Sigmoid colon (tissue), 7 donors: ENCODE measurements at regions of chr5 and their contacts with region 1.

Region 1: GRCh38 chr5:134527146-134527960 is 1.9 kb downstream of the JADE2 start:
- DNase-seq: peak; percentile 94
- H3K4me3 ChIP-seq: peak overlapping the region; percentile 73 to 95 (median 84)
- H3K27ac ChIP-seq: peak overlapping the region; percentile 95 to 99 (median 96)
- H3K4me1 ChIP-seq: peaks cover 0 to 55% (median 53%) of the 10 kb centered on the region in 4 donors
- H3K27me3 ChIP-seq: no peaks in the 10 kb centered on the region
- CTCF ChIP-seq: peak; percentile 92 to 99 (median 96)
- EP300 ChIP-seq: no peak
- POLR2A ChIP-seq: peak in 1 of 2 donors; percentile 45

Region 2: DNA sequence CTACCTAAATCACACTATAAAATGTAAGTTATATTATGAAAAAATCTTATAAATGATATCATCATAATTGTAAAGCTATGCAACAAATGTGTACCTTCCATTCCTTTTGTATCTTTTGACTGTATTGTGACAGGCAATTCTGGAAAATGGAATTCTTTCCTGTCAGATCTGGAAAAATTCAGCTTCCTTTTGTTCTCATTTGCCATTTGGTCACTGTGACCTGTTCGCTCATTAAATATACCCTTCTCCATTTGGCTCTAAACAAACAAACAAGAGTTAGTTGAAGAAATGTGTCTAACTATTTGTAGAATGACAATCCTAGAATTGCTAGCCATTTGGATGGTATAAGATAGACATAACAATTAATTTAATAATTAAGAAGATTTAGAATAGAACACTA is 223.0 kb before region 1 on chr5:
- intact Hi-C with region 1: loop called (anchors 5 kb)
- DNase-seq: no peak
- H3K4me3 ChIP-seq: no peak overlapping the region
- H3K27ac ChIP-seq: no peak overlapping the region
- H3K4me1 ChIP-seq: no peaks in the 10 kb centered on the region
- H3K27me3 ChIP-seq: no peaks in the 10 kb centered on the region
- CTCF ChIP-seq: no peak
- EP300 ChIP-seq: no peak
- POLR2A ChIP-seq: no peak

Region 3: DNA sequence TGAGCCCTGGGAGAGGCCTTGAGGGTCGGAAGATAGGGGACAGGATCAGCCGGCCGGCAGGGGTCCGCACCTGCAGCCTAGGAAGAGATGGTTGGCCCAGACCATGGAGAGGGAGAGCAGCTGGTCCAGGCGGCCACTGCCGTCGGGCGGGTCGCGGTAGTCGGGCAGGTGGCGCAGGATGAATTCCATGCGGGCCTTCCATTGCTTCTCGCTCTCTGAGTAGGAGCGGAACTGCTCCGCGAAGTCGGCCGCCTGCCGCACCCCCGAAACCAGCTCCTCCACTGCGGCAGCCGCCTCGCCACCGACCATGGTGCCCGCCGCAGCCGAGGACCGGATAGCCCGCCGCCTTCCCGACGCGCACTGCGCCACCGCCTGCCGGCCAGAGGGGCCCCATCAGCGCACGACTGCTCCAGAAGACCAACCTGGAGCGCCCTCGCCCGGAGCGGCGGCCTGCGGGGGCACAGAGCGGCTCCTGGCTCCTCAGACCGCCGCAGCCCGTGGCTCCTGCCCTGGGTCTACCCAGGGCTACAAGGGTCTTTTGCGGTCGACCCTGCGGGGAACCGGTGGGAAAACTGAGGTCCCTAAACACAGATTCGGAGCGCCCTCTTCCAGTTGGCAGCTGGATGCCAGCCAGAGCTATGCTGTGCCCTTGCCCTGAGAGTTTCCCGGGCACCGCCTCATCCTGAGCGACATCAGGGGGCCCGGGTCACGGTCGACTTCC is 115.6 kb before region 1 on chr5 and contains the start of gene CDKN2AIPNL:
- intact Hi-C with region 1: loop called (anchors 1 kb)
- DNase-seq: peak; percentile 95
- H3K4me3 ChIP-seq: peak within 1 kb of the TSS; percentile 63 to 88 (median 79)
- H3K27ac ChIP-seq: peak within 1 kb of the TSS; percentile 80 to 87 (median 84)
- H3K4me1 ChIP-seq: peaks cover 0 to 27% (median 25%) of the 10 kb centered on the region in 4 donors
- H3K27me3 ChIP-seq: no peaks in the 10 kb centered on the region
- CTCF ChIP-seq: peak; percentile 56 to 81 (median 74)
- EP300 ChIP-seq: no peak
- POLR2A ChIP-seq: peak; percentile 22 to 46
- total RNA-seq, gene CDKN2AIPNL: 18.9 to 28.5 (median 21.3) TPM

Region 4: DNA sequence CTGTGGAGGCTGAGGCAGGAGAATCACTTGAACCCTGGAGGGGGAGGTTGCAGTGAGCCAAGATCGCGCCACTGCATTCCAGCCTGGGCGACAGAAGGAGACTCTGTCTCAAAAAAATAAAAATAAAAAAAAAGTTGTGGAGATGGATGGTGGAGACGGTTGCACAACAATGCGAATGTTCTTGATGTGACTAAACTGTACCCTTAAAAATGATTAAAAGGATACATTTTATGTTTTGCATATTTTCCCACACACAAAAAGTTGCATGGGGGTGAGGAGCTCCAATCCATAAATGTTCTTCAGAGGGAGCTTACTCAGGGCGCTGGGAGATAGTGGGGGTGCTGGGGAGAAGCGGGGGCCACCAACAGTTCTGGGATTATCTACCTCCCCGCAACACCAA is 71.9 kb before region 1 on chr5:
- intact Hi-C with region 1: no loop called
- DNase-seq: peak; percentile 20
- H3K4me3 ChIP-seq: no peak overlapping the region
- H3K27ac ChIP-seq: no peak overlapping the region
- H3K4me1 ChIP-seq: peaks cover 0 to 21% (median 17%) of the 10 kb centered on the region in 4 donors
- H3K27me3 ChIP-seq: no peaks in the 10 kb centered on the region
- CTCF ChIP-seq: no peak
- EP300 ChIP-seq: no peak
- POLR2A ChIP-seq: no peak

Region 5: DNA sequence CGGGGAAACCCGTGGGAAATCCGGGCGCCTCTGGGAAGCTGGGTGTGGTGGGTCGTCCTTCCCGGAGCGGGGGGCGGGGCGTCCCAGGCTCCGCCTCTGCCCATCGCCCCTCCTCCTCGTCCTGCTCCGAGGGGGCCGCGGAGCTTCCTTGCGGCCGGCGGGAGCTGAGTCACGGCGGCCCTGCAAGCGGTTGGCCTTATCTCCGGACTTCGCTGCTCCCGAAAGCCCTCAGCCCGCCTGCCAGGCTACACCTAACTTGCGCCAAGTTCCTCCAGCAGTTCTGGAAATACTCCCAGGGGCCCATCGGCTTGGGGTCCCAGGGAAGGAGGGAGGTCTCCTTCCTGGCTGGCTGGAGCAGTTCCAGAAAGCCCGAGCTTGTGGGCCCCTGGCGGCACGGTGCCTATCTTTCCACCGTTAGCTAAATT is 61.5 kb before region 1 on chr5:
- intact Hi-C with region 1: loop called (anchors 1 kb)
- DNase-seq: peak; percentile 96
- H3K4me3 ChIP-seq: peak overlapping the region; percentile 47 to 59 (median 55)
- H3K27ac ChIP-seq: peak overlapping the region; percentile 93 to 98 (median 96)
- H3K4me1 ChIP-seq: peaks cover 0 to 29% (median 22%) of the 10 kb centered on the region in 4 donors
- H3K27me3 ChIP-seq: no peaks in the 10 kb centered on the region
- CTCF ChIP-seq: no peak
- EP300 ChIP-seq: peak in 2 of 4 donors; percentile 4 to 51
- POLR2A ChIP-seq: peak; percentile 63 to 88

Region 6: DNA sequence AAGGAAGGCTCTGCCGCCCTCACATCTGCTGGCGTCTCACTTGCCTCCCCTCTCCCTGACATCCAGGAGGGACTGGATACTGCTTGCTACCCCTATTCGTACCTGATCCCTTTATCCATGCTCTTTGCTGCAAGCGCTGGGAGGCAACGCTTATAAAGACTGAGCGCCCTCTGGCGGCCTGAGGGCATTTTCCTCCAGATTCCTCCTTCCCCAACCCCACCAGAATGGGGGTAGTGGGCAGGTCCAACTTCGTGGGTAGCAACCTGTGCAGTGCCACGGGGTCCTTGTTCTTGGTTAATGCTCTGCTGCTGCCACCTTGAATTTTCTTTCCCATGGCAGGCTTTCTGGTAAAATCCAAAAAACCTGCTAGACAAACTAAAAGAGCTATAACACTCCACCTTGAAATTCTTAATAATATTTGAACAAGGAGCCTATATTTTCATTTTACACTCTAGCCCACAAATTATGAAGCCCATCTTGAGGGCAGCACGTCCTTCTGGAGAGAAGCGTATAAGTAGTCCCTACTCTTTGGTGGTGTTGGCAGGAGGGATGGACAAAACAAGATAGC is 50.5 kb after region 1 on chr5:
- intact Hi-C with region 1: loop called (anchors 1 kb)
- DNase-seq: peak; percentile 87
- H3K4me3 ChIP-seq: no peak overlapping the region
- H3K27ac ChIP-seq: peak overlapping the region in 1 of 4 donors; percentile 2
- H3K4me1 ChIP-seq: peaks cover 0 to 48% (median 39%) of the 10 kb centered on the region in 4 donors
- H3K27me3 ChIP-seq: no peaks in the 10 kb centered on the region
- CTCF ChIP-seq: peak; percentile 63 to 83 (median 78)
- EP300 ChIP-seq: no peak
- POLR2A ChIP-seq: no peak

Region 7: DNA sequence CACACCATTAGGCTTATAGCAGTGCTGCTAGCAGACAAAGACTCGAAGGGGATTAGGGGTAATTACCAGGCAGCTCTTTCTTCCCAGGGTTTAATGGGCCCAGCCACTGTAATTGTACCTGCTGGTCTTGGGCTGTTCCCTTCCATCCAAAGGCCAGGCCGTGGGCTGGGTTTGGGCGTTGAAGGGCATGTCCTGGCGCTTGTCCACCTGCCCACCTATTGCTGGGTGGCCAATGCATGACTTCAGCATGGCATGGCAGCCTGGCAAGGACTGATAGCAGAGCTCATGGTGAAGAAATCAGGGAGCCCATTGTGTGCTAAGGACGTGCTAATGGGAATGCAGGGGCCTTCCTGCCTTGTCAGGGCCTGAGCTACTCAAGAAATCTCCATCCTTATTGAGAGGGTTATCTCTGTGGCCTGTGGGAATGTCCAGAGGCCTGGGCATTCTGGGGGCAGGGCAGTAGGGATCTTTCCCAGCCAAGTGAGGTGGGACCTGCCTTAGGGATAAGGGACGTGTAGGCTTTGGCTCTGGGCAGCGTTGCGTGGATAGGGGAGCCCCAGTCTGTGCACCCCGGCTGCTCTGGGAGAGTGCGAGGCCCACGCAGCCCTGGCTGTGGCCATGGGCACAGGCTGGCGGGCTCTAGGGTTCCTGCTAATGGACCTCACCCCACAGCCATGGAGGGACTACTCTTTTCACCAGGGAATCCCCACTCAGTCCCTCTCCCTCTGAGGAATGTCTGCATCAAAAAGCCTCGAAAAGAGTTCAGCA is 622.8 kb after region 1 on chr5:
- intact Hi-C with region 1: no loop called
- DNase-seq: no peak
- H3K4me3 ChIP-seq: no peak overlapping the region
- H3K27ac ChIP-seq: no peak overlapping the region
- H3K4me1 ChIP-seq: no peaks in the 10 kb centered on the region
- H3K27me3 ChIP-seq: no peaks in the 10 kb centered on the region
- CTCF ChIP-seq: no peak
- EP300 ChIP-seq: no peak
- POLR2A ChIP-seq: no peak